ENCODE measurements at regions of chr7 and their contacts with region 1.

Region 1: DNA sequence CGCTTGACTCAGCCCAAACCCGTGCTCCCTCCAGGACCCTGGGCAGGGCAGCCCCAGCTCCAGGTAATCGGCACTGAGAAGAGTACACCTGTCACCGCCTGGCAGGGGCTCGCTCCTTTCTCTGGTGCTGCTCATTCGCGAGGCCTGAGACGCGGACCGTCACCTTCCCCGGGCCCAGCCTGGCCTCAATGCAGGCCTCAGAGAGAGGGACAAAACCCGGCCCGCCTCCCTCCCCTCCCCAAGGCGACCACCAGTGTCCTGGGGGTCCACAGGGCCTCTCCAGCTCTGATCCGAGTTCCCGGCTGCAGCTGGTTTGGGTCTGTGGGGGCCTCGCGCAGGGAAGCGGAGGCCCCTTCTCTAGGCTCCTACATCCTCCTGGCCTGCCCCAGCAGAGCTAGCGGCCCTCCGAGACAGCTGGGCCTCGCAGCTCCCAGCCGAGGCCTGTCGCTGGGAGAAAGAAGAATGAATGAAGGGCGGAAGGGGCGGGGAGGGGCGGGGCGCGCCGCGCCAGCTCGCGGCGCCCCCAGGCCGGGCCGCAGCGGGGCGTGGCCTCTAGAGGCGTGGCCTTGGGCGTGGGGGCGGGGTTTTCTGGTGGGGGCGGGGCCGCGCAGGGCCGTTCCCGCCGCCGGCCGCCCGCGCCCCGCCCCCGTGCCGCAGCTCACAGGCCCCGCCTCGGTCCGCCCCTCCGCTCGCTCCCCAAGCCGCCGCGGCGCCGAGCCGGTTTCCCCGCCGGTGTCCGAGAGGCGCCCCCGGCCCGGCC is at the start of gene LIMK1:
- DNase-seq: peak; percentile 78 to 86 (median 81)
- H3K4me3 ChIP-seq: peak within 1 kb of the TSS; percentile 55
- H3K4me3 Mint-ChIP-seq: peak within 1 kb of the TSS; percentile 74 to 92 (median 84)
- H3K27ac ChIP-seq: peak within 1 kb of the TSS; percentile 38
- H3K27ac Mint-ChIP-seq: peak within 1 kb of the TSS; percentile 12 to 94 (median 79)
- H3K4me1 ChIP-seq: peaks cover 15% of the 10 kb centered on the region
- H3K4me1 Mint-ChIP-seq: peaks cover 10 to 17% (median 11%) of the 10 kb centered on the region in 3 donors
- H3K27me3 ChIP-seq: no peaks in the 10 kb centered on the region
- H3K27me3 Mint-ChIP-seq: no peaks in the 10 kb centered on the region
- total RNA-seq, gene LIMK1: 23.1 to 23.6 TPM

Region 2: GRCh38 chr7:74026903-74027551 is 56.3 kb before region 1 on chr7:
- CTCF ChIA-PET with region 1: no interaction called
- POLR2A ChIA-PET with region 1: no interaction called
- DNase-seq: peak; percentile 18 to 69 (median 42)
- H3K4me3 ChIP-seq: no peak overlapping the region
- H3K4me3 Mint-ChIP-seq: peak overlapping the region in 1 of 7 donors; percentile 23
- H3K27ac ChIP-seq: no peak overlapping the region
- H3K27ac Mint-ChIP-seq: peak overlapping the region in 1 of 8 donors; percentile 60
- H3K4me1 ChIP-seq: peaks cover 4% of the 10 kb centered on the region
- H3K4me1 Mint-ChIP-seq: peaks cover 9 to 17% (median 12%) of the 10 kb centered on the region in 3 donors
- H3K27me3 ChIP-seq: peaks cover 26% of the 10 kb centered on the region
- H3K27me3 Mint-ChIP-seq: peaks cover 37 to 58% of the 10 kb centered on the region in 2 donors

Region 3: GRCh38 chr7:74094224-74095101 is 11.2 kb after region 1 on chr7:
- CTCF ChIA-PET with region 1: interaction called, 8 read pairs
- POLR2A ChIA-PET with region 1: interaction called, 17 read pairs
- DNase-seq: peak; percentile 57 to 86 (median 65)
- H3K4me3 ChIP-seq: peak overlapping the region; percentile 54
- H3K4me3 Mint-ChIP-seq: peak overlapping the region; percentile 81 to 96 (median 92)
- H3K27ac ChIP-seq: peak overlapping the region; percentile 82
- H3K27ac Mint-ChIP-seq: peak overlapping the region; percentile 95 to 99 (median 98)
- H3K4me1 ChIP-seq: peaks cover 26% of the 10 kb centered on the region
- H3K4me1 Mint-ChIP-seq: peaks cover 15 to 37% (median 15%) of the 10 kb centered on the region in 3 donors
- H3K27me3 ChIP-seq: no peaks in the 10 kb centered on the region
- H3K27me3 Mint-ChIP-seq: no peaks in the 10 kb centered on the region

Region 4: GRCh38 chr7:74104703-74105102 is 21.4 kb after region 1 on chr7:
- CTCF ChIA-PET with region 1: no interaction called
- POLR2A ChIA-PET with region 1: no interaction called
- DNase-seq: no peak
- H3K4me3 ChIP-seq: no peak overlapping the region
- H3K4me3 Mint-ChIP-seq: no peak overlapping the region
- H3K27ac ChIP-seq: no peak overlapping the region
- H3K27ac Mint-ChIP-seq: no peak overlapping the region
- H3K4me1 ChIP-seq: no peaks in the 10 kb centered on the region
- H3K4me1 Mint-ChIP-seq: no peaks in the 10 kb centered on the region
- H3K27me3 ChIP-seq: no peaks in the 10 kb centered on the region
- H3K27me3 Mint-ChIP-seq: no peaks in the 10 kb centered on the region

Region 5: DNA sequence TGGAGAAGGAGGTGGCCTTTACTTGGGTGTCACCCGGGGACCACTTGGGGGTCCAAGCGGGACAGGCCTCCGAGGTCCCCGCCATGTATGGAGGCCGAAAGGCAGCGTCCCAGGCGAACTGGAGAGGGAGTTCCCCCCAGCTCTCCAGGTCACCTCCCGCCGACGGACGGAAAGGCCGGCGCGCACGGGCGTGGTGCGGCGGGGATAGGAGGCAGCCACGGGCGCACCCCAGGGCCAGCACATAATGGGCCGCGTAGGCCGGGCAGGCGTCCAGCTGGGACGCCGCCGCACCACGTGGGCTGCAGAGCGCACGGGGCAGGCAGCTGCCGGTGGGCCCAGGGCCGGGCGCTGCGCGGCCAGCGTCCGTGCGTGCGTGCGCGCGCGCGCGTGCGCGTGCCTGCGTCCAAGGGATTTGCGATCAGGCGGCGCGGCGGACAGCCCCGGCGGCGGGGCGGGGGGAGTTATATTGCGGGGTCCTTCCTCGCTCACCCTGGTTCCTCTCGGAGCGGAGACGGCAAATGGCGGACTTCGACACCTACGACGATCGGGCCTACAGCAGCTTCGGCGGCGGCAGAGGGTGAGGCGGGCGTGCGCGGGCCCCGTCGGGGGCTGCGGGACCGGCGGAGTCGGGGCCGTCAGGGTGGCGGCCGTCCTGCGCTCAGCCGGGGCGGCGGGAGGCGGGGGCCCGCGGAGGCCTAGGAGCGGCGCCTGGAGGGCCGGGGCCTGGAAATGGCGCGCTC is 90.7 kb after region 1 on chr7 and contains the start of gene EIF4H:
- CTCF ChIA-PET with region 1: interaction called, 4 read pairs
- POLR2A ChIA-PET with region 1: interaction called, 11 read pairs
- DNase-seq: peak; percentile 93 to 96 (median 95)
- H3K4me3 ChIP-seq: peak within 1 kb of the TSS; percentile 86
- H3K4me3 Mint-ChIP-seq: peak within 1 kb of the TSS; percentile 85 to 95 (median 91)
- H3K27ac ChIP-seq: peak within 1 kb of the TSS; percentile 88
- H3K27ac Mint-ChIP-seq: peak within 1 kb of the TSS; percentile 95 to 98 (median 96)
- H3K4me1 ChIP-seq: peaks cover 49% of the 10 kb centered on the region
- H3K4me1 Mint-ChIP-seq: peaks cover 37 to 56% (median 54%) of the 10 kb centered on the region in 3 donors
- H3K27me3 ChIP-seq: no peaks in the 10 kb centered on the region
- H3K27me3 Mint-ChIP-seq: no peaks in the 10 kb centered on the region
- total RNA-seq, gene EIF4H: 346 to 349 TPM

Measured in CD8-positive, alpha-beta memory T cell (primary cell).